PC-3 (cell line): ENCODE measurements at regions of chr21 and their contacts with region 1.

Region 1: GRCh38 chr21:37563641-37564340 is 197.2 kb downstream of the DYRK1A start:
- DNase-seq: peak; percentile 96
- ATAC-seq: peak; percentile 89
- H3K4me3 ChIP-seq: peak overlapping the region; percentile 70
- H3K27ac ChIP-seq: peak overlapping the region; percentile 98
- H3K4me1 ChIP-seq: peaks cover 22% of the 10 kb centered on the region
- H3K27me3 ChIP-seq: no peaks in the 10 kb centered on the region
- CTCF ChIP-seq: peak; percentile 44; the same call in 1 of the 2 replicates

Region 2: DNA sequence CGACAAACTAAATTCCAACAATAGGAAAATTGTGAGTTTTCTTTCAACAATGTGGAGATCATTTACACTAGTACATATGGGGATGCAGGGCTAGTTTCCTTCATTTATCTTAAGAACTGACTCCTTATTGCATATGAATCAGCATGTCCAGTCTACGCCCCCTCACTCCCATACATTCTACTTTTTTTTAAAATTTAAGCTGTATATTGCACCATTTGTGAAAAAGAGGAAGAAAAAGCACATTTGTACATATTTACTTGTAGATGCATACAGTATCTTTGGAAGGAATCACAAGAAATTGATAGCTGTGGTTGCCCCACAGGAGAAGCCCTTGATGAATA is 312.5 kb before region 1 on chr21:
- CTCF ChIA-PET with region 1: no interaction called
- POLR2A ChIA-PET with region 1: interaction called, 13 read pairs
- intact Hi-C with region 1: no loop called
- DNase-seq: no peak
- ATAC-seq: no peak
- H3K4me3 ChIP-seq: no peak overlapping the region
- H3K27ac ChIP-seq: no peak overlapping the region
- H3K4me1 ChIP-seq: no peaks in the 10 kb centered on the region
- H3K27me3 ChIP-seq: no peaks in the 10 kb centered on the region
- CTCF ChIP-seq: no peak

Region 3: DNA sequence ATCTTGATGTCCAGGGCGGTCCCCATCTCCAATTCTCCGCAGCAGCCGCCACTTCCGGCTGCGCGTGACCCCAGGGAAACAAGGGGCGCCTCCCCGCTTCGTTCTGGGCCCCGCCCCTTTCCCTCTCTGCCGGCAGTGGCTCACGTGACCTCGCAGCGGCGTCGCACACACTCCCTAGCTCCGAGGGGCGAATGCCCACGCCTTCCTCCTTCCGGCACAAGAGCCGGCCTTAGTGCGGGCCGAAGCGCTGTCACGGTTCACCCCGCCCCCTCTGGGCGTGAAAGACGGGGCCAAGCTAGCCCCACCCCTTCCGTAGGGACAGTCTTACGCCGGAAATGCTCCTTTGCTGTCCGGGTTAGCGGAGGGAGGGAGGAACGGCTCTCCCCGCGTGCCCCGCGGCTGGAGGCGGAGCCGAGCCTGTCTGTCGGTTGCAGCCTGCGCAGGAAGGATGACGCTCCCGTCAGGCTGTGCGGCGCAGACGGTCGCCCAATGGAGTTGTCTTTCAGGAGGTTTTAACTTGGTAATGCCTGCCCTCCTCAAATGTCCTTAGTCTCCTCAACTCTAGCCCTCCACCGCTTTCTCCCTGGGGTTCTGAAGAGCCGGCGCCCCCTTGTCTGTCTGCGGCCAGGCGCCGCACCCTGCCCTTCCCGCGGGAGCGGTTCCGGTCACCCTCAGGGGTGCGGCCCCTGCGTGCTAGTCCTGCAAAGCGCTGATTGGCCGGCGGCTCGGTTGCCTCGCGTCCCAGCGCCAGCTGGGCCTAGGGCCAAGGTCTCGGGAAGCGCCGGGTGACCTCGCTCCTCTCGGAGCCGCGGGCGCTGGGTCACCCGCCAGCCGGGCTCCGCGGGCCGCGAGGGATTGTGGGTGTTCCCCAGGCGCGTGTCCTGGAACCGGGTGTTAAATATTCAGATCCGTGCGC is 296.3 kb before region 1 on chr21 and contains the start of gene VPS26C:
- CTCF ChIA-PET with region 1: no interaction called
- POLR2A ChIA-PET with region 1: interaction called, 8 read pairs
- intact Hi-C with region 1: loop called (anchors 5 kb)
- DNase-seq: peak; percentile 99
- ATAC-seq: peak; percentile 86
- H3K4me3 ChIP-seq: peak within 1 kb of the TSS; percentile 69
- H3K27ac ChIP-seq: peak within 1 kb of the TSS; percentile 94
- H3K4me1 ChIP-seq: peaks cover 23% of the 10 kb centered on the region
- H3K27me3 ChIP-seq: no peaks in the 10 kb centered on the region
- CTCF ChIP-seq: no peak
- total RNA-seq, gene VPS26C: 46.8 and 63.3 TPM in 2 replicates

Region 4: GRCh38 chr21:37366482-37367316 is 197.1 kb before region 1 on chr21 and contains the start of gene DYRK1A:
- CTCF ChIA-PET with region 1: no interaction called
- POLR2A ChIA-PET with region 1: interaction called, 5 read pairs
- intact Hi-C with region 1: loop called (anchors 5 kb)
- DNase-seq: peak; percentile 99
- ATAC-seq: peak; percentile 71
- H3K4me3 ChIP-seq: peak within 1 kb of the TSS; percentile 79
- H3K27ac ChIP-seq: peak within 1 kb of the TSS; percentile 96
- H3K4me1 ChIP-seq: peaks cover 28% of the 10 kb centered on the region
- H3K27me3 ChIP-seq: no peaks in the 10 kb centered on the region
- CTCF ChIP-seq: no peak
- total RNA-seq, gene DYRK1A: 48.7 and 59.1 TPM in 2 replicates

Region 5: GRCh38 chr21:37532868-37533780 is 30.7 kb before region 1 on chr21:
- CTCF ChIA-PET with region 1: interaction called, 4 read pairs
- POLR2A ChIA-PET with region 1: interaction called, 7 read pairs
- intact Hi-C with region 1: loop called (anchors 2 kb)
- DNase-seq: peak; percentile 86
- ATAC-seq: peak; percentile 92
- H3K4me3 ChIP-seq: peak overlapping the region; percentile 57
- H3K27ac ChIP-seq: peak overlapping the region; percentile 76
- H3K4me1 ChIP-seq: peaks cover 29% of the 10 kb centered on the region
- H3K27me3 ChIP-seq: no peaks in the 10 kb centered on the region
- CTCF ChIP-seq: peak; percentile 50

Region 6: DNA sequence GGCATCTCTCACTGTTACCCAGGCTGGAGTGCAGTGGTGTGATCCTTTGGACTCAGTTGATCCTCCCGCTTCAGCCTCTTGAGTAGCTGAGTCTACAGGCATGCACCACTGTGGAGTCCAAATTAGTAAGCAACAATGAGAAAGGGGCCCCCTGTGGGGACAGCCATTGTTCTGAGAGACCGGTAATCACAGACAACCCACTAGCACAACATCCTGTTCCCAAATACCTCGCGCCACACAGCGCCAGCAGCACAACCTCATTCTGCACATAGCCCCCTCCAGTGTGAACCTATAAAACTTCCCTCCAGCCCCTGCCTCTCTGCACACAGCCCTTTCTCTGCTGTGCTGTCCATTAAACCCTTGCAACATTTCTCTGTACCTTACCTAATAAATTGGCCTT is 29.2 kb after region 1 on chr21:
- CTCF ChIA-PET with region 1: no interaction called
- POLR2A ChIA-PET with region 1: no interaction called
- intact Hi-C with region 1: no loop called
- DNase-seq: no peak
- ATAC-seq: no peak
- H3K4me3 ChIP-seq: no peak overlapping the region
- H3K27ac ChIP-seq: no peak overlapping the region
- H3K4me1 ChIP-seq: no peaks in the 10 kb centered on the region
- H3K27me3 ChIP-seq: no peaks in the 10 kb centered on the region; the same call in none of the 2 replicates
- CTCF ChIP-seq: no peak

Region 7: DNA sequence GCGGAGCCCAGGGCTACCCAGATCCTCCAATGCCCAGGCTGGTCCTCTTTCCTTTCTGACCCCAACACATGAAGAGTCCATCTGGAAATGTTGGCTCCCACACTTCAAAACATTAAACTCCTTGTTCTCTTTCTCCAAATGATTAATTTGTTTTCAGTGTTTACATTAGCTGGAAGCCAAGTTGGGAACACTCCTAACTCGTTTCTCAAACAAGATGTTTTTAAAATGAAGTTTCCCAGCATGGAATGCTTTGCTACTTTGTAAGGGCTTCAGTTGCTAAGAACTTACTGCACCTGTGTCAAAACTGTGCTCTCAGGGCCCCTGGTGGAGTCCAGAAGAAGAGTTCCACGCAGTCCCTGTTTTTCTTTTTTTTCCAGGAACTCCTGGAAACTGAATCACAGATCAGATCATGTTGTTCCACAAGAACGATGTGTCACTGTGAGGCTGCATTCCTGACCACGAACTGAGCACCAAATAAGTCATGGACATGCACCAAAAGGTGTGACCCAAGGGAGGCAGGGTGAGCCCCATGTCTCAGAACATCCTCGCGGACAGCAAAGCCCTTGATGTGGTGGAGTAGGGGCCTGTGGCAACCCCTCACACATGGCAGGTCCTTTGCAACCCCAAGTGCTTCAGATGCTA is 95.1 kb after region 1 on chr21:
- CTCF ChIA-PET with region 1: no interaction called
- POLR2A ChIA-PET with region 1: no interaction called
- intact Hi-C with region 1: loop called (anchors 1 kb)
- DNase-seq: peak; percentile 87
- ATAC-seq: peak; percentile 93
- H3K4me3 ChIP-seq: no peak overlapping the region
- H3K27ac ChIP-seq: no peak overlapping the region
- H3K4me1 ChIP-seq: peaks cover 17% of the 10 kb centered on the region
- H3K27me3 ChIP-seq: no peaks in the 10 kb centered on the region
- CTCF ChIP-seq: peak; percentile 51

Region 8: DNA sequence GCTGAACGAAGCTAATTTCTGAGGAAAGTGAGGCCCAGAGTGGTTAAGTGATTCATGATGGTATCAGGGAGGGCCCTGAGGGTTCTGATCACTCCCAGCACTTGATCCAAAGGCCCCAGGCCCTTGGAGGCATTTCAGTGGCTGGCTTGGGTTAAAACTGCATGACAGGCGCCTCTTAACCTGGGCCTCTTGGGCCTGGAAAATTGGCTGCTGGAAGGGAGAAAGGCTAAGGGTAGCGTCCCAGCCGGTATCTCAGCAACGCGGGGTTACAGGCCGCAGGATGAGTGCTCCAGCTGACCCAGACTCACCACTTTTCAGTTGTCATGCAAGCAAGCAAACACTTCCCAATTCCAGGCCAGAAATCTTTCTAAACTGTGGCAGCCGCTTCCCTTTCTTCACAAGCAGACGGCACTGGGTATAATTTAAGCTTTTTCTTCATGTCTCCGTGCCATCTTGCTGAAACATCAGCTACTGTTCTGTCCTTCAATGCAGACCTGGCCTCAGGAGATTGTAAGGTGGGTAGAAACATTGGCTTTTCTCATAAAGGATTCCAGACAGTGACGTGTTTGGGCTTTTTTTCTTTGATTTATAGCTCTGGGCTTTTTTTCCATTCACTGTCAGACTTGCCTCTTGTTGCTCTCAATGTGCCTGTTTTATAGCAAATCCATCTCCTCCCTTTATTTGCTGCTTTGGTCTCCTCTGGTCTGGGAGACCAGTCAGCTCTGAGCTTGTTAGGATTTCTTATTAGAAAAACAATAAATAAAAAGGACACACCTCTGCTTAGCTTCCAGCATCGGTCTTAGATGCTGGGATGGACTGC is 123.4 kb after region 1 on chr21:
- CTCF ChIA-PET with region 1: no interaction called
- POLR2A ChIA-PET with region 1: no interaction called
- intact Hi-C with region 1: no loop called
- DNase-seq: no peak
- ATAC-seq: no peak
- H3K4me3 ChIP-seq: no peak overlapping the region
- H3K27ac ChIP-seq: no peak overlapping the region
- H3K4me1 ChIP-seq: no peaks in the 10 kb centered on the region
- H3K27me3 ChIP-seq: peaks cover 47% of the 10 kb centered on the region
- CTCF ChIP-seq: no peak